OCI-LY7 (cell line): ENCODE measurements at regions of chr12 and their contacts with region 1.

Region 1: GRCh38 chr12:123329799-123330198 is 34.8 kb downstream of the SBNO1 start:
- DNase-seq: no peak
- H3K4me3 ChIP-seq: no peak overlapping the region
- H3K27ac ChIP-seq: no peak overlapping the region
- H3K4me1 ChIP-seq: no peaks in the 10 kb centered on the region
- CTCF ChIP-seq: no peak

Region 2: GRCh38 chr12:123180171-123180570 is 149.6 kb before region 1 on chr12:
- CTCF ChIA-PET with region 1: no interaction called
- POLR2A ChIA-PET with region 1: no interaction called
- intact Hi-C with region 1: loop called (anchors 10 kb)
- DNase-seq: no peak
- H3K4me3 ChIP-seq: no peak overlapping the region
- H3K27ac ChIP-seq: no peak overlapping the region
- H3K4me1 ChIP-seq: no peaks in the 10 kb centered on the region
- CTCF ChIP-seq: no peak

Region 3: DNA sequence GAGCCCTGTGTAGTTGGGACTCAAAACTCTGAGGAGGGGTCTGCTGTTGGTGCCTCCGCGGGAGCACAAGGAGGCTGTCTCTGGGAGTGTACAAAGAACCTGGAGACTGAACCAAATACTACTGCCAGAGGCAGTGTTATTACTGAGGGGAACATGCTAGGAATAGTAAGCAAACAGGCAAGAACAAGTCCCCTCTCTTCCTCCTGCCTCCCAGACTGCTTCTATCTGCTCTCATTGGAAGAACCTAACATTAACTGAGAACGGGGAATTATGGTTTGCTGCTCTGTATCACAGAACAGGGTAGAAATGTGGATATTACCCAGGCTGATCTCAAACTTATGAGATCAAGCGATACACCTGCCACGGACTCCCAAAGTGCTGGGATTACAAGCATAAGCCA is 49.6 kb after region 1 on chr12:
- CTCF ChIA-PET with region 1: no interaction called
- POLR2A ChIA-PET with region 1: no interaction called
- intact Hi-C with region 1: no loop called
- DNase-seq: no peak
- H3K4me3 ChIP-seq: no peak overlapping the region
- H3K27ac ChIP-seq: no peak overlapping the region
- H3K4me1 ChIP-seq: no peaks in the 10 kb centered on the region
- CTCF ChIP-seq: no peak